WTC11 (cell line): ENCODE measurements at regions of chr2 and their contacts with region 1.

Region 1: DNA sequence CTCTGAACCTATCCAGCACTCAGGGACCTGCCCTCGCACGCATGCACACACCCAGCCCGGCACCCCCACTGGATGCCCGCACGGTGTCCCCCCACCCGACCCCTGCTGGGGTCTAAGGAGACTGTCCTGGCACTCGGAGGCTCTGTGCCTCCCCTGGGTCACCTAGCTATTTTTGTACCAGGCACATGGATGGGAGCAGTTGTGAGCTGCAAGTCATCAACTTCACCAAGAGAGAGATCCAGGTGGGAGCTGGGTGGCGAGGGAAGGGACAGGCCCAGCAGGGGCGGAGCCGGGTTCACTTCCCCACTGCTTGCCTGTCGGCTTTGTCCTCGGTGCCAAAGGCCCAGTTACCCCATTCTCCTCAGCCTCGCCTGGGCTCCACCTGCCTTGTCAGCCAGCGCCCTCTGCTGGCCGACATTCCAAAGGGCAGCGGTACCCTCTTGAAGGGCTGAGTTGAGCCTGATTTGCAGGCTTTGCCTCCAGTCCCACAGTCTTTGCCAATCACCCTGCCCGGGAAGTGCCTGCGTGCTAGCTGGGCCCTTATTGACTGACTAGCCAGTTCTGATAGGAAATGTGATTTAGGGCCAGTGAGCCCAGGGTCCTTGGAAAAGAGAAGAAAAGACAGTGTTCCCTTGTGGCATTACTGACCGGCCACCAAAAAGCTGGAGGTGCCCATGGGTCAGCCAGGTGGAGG is 5.8 kb downstream of the NT5DC4 start:
- DNase-seq: peak; percentile 95
- ATAC-seq: peak; percentile 93
- H3K4me3 Mint-ChIP-seq: no peak overlapping the region
- H3K27ac Mint-ChIP-seq: no peak overlapping the region
- H3K4me1 Mint-ChIP-seq: peaks cover 8% of the 10 kb centered on the region; the same call in 1 of the 2 replicates
- H3K27me3 Mint-ChIP-seq: no peaks in the 10 kb centered on the region
- CTCF ChIP-seq: peak; percentile 87

Region 2: DNA sequence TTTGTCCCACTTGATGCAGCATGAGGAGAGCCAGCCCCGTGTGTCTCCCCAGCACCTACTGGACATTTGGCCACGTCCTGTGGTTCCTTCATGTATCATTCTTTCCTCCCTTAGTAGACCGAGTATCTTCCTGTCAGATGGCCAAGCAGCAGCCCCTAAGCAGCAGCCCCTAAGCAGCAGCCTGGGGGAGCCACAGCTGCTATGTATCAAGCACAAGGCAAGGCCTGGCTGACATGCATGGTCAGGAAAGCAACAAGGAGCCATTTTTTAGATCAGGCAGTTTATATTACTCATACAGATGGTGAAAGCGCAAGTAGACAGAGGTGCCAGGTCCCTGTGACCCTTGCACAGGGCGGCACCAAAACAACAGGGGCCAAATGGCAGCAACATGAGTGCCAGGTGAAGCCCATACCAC is 120.1 kb before region 1 on chr2:
- CTCF ChIA-PET with region 1: interaction called, 51 read pairs
- POLR2A ChIA-PET with region 1: no interaction called
- DNase-seq: no peak
- ATAC-seq: no peak
- H3K4me3 Mint-ChIP-seq: no peak overlapping the region
- H3K27ac Mint-ChIP-seq: peak overlapping the region; percentile 3; the same call in 1 of the 2 replicates
- H3K4me1 Mint-ChIP-seq: no peaks in the 10 kb centered on the region
- H3K27me3 Mint-ChIP-seq: peaks cover 10% of the 10 kb centered on the region
- CTCF ChIP-seq: no peak

Region 3: GRCh38 chr2:112626604-112627059 is 100.0 kb before region 1 on chr2:
- CTCF ChIA-PET with region 1: interaction called, 143 read pairs
- POLR2A ChIA-PET with region 1: no interaction called
- DNase-seq: peak; percentile 55
- ATAC-seq: peak; percentile 81
- H3K4me3 Mint-ChIP-seq: no peak overlapping the region
- H3K27ac Mint-ChIP-seq: no peak overlapping the region
- H3K4me1 Mint-ChIP-seq: peaks cover 31% of the 10 kb centered on the region
- H3K27me3 Mint-ChIP-seq: no peaks in the 10 kb centered on the region; the same call in 1 of the 2 replicates
- CTCF ChIP-seq: peak; percentile 45; the same call in 1 of the 2 replicates

Region 4: GRCh38 chr2:112699984-112700667 is 26.5 kb before region 1 on chr2:
- CTCF ChIA-PET with region 1: no interaction called
- POLR2A ChIA-PET with region 1: no interaction called
- DNase-seq: no peak
- ATAC-seq: no peak
- H3K4me3 Mint-ChIP-seq: no peak overlapping the region
- H3K27ac Mint-ChIP-seq: no peak overlapping the region
- H3K4me1 Mint-ChIP-seq: no peaks in the 10 kb centered on the region
- H3K27me3 Mint-ChIP-seq: peaks cover 6% of the 10 kb centered on the region; the same call in 1 of the 2 replicates
- CTCF ChIP-seq: no peak

Region 5: DNA sequence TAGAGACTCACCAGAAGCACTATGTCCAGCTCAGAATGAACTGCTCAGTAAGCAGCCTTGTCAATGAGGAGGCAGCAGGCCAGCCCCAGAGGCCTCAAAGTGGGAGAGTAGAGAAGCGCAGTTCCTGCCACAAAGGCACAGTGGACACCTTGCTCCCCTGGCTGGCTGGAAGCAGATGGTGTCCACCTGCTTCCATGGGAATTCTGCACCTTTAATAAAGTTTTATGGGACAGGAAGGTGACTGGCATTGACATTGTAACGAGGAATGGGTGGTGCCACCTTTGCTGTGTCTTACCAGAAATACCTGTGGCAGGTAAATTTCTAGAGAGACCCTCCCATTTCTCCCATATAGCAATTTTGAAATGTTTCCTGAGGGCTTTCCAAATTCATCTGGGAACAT is 116.6 kb after region 1 on chr2:
- CTCF ChIA-PET with region 1: no interaction called
- POLR2A ChIA-PET with region 1: no interaction called
- DNase-seq: no peak
- ATAC-seq: no peak
- H3K4me3 Mint-ChIP-seq: no peak overlapping the region
- H3K27ac Mint-ChIP-seq: no peak overlapping the region
- H3K4me1 Mint-ChIP-seq: peaks cover 14% of the 10 kb centered on the region
- H3K27me3 Mint-ChIP-seq: peaks cover 23% of the 10 kb centered on the region
- CTCF ChIP-seq: no peak

Region 6: DNA sequence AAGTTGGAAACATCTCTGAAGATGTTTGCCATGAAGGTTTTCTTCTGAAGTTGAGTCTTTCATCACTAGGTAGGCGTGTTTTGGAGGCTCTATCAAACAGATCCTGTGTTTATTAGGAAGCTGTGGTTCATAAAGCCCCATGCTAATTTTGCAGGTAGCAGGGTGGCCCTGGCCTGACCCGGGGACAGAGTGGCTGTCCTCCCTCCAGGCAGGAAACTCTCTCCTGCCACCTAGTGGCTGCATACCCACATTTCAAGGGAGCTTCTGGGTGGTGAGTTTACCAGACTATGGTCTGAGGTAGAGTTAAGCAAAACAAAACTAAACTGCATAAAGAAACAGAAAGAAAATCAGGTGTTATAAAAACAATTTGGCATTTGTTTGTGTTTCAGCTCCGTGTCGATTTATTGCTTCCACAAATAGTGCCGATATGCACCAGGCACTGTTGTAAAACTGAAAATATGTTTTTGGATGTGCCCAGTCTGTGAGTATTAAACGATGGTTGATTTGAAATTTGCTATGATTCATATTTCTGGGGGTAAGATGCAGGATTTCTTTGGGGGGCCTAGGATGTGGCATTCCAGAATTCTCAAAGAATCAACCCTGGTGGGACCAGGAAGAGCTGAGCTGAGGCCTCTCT is 158.3 kb after region 1 on chr2:
- CTCF ChIA-PET with region 1: interaction called, 18 read pairs
- POLR2A ChIA-PET with region 1: interaction called, 4 read pairs
- DNase-seq: peak; percentile 89
- ATAC-seq: peak; percentile 98
- H3K4me3 Mint-ChIP-seq: no peak overlapping the region
- H3K27ac Mint-ChIP-seq: no peak overlapping the region
- H3K4me1 Mint-ChIP-seq: peaks cover 9% of the 10 kb centered on the region
- H3K27me3 Mint-ChIP-seq: no peaks in the 10 kb centered on the region; the same call in none of the 2 replicates
- CTCF ChIP-seq: peak; percentile 89